ENCODE measurements at regions of chr10 and their contacts with region 1.

Region 1: GRCh38 chr10:72354478-72355213 is at the start of gene DNAJB12:
- DNase-seq: peak; percentile 90 to 96 (median 94)
- ATAC-seq: peak; percentile 94
- H3K4me3 ChIP-seq: peak within 1 kb of the TSS; percentile 98
- H3K4me3 Mint-ChIP-seq: peak within 1 kb of the TSS; percentile 93 to 99 (median 96)
- H3K27ac ChIP-seq: peak within 1 kb of the TSS; percentile 88
- H3K27ac Mint-ChIP-seq: peak within 1 kb of the TSS; percentile 93 to 100 (median 97)
- H3K4me1 ChIP-seq: peaks cover 8 to 13% of the 10 kb centered on the region in 2 donors
- H3K4me1 Mint-ChIP-seq: peaks cover 31 to 59% (median 46%) of the 10 kb centered on the region in 7 donors
- H3K27me3 ChIP-seq: no peaks in the 10 kb centered on the region
- H3K27me3 Mint-ChIP-seq: no peaks in the 10 kb centered on the region
- total RNA-seq, gene DNAJB12: 24.6 to 40.5 (median 36.2) TPM

Region 2: GRCh38 chr10:71371750-71372166 is 982.9 kb before region 1 on chr10:
- CTCF ChIA-PET with region 1: no interaction called
- POLR2A ChIA-PET with region 1: no interaction called
- intact Hi-C with region 1: loop called in 1 of 2 experiments (anchors 10 kb)
- DNase-seq: no peak
- ATAC-seq: peak; percentile 60
- H3K4me3 ChIP-seq: no peak overlapping the region
- H3K4me3 Mint-ChIP-seq: no peak overlapping the region
- H3K27ac ChIP-seq: no peak overlapping the region
- H3K27ac Mint-ChIP-seq: no peak overlapping the region
- H3K4me1 ChIP-seq: no peaks in the 10 kb centered on the region
- H3K4me1 Mint-ChIP-seq: peaks cover 0 to 10% (median 0%) of the 10 kb centered on the region in 7 donors
- H3K27me3 ChIP-seq: no peaks in the 10 kb centered on the region
- H3K27me3 Mint-ChIP-seq: peaks cover 0 to 13% (median 8%) of the 10 kb centered on the region in 5 donors

Region 3: GRCh38 chr10:72337020-72337629 is 17.5 kb before region 1 on chr10:
- CTCF ChIA-PET with region 1: interaction called, 27 read pairs
- POLR2A ChIA-PET with region 1: interaction called, 4 read pairs
- intact Hi-C with region 1: no loop called
- DNase-seq: peak; percentile 34 to 77 (median 56)
- ATAC-seq: peak; percentile 25
- H3K4me3 ChIP-seq: no peak overlapping the region
- H3K4me3 Mint-ChIP-seq: peak overlapping the region in 4 of 10 donors; percentile 12 to 93 (median 30)
- H3K27ac ChIP-seq: peak overlapping the region; percentile 79
- H3K27ac Mint-ChIP-seq: peak overlapping the region; percentile 29 to 99 (median 92)
- H3K4me1 ChIP-seq: peaks cover 52 to 58% of the 10 kb centered on the region in 2 donors
- H3K4me1 Mint-ChIP-seq: peaks cover 31 to 66% (median 55%) of the 10 kb centered on the region in 7 donors
- H3K27me3 ChIP-seq: no peaks in the 10 kb centered on the region
- H3K27me3 Mint-ChIP-seq: no peaks in the 10 kb centered on the region

Region 4: DNA sequence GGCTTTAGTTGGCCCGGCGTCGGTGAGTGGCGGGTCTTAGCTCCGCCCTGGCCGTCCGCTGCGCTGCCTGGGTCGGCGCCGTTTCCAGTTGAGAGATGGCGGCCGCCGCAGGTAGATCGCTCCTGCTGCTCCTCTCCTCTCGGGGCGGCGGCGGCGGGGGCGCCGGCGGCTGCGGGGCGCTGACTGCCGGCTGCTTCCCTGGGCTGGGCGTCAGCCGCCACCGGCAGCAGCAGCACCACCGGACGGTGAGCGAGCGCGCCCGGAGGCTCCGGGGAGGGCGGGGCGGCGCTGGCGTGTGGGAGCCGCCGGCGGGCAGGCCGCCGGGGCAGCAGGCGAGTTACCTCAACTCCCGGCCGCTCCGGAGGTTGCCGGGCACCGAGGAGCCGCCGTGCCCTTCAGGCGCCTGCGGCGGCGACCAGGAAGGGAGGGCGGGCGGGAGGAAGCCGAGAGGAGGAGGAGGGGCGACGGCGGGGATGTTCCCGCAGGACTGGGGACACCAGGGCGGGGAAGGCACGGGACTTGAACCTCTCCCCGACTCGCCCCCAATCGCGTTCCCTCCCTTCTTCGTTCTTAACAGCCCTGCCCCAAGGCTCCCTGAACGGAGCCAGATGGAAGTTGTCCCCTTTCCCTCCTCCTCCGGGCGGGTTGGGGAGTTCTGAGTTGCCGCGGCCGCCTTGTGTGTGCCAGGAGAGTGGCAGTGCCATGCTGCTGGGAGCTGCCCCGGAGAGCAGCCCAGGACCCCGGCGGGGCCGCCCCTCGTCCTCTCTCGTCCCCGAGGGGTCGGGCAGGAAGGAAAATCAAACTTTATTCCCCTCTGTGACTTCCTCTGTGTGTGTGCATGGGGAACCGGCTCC is 337.6 kb after region 1 on chr10 and contains the start of gene MCU:
- CTCF ChIA-PET with region 1: no interaction called
- POLR2A ChIA-PET with region 1: no interaction called
- intact Hi-C with region 1: loop called in 1 of 2 experiments (anchors 1 kb)
- DNase-seq: peak; percentile 85 to 94 (median 91)
- ATAC-seq: peak; percentile 98
- H3K4me3 ChIP-seq: peak within 1 kb of the TSS; percentile 86
- H3K4me3 Mint-ChIP-seq: peak within 1 kb of the TSS; percentile 84 to 93 (median 91)
- H3K27ac ChIP-seq: peak within 1 kb of the TSS; percentile 68
- H3K27ac Mint-ChIP-seq: peak within 1 kb of the TSS; percentile 5 to 93 (median 76)
- H3K4me1 ChIP-seq: peaks cover 11 to 12% of the 10 kb centered on the region in 2 donors
- H3K4me1 Mint-ChIP-seq: peaks cover 9 to 39% (median 32%) of the 10 kb centered on the region in 7 donors
- H3K27me3 ChIP-seq: no peaks in the 10 kb centered on the region
- H3K27me3 Mint-ChIP-seq: peaks cover 0 to 6% (median 0%) of the 10 kb centered on the region in 5 donors
- total RNA-seq, gene MCU: 7.7 to 14.3 (median 12.7) TPM

Region 5: DNA sequence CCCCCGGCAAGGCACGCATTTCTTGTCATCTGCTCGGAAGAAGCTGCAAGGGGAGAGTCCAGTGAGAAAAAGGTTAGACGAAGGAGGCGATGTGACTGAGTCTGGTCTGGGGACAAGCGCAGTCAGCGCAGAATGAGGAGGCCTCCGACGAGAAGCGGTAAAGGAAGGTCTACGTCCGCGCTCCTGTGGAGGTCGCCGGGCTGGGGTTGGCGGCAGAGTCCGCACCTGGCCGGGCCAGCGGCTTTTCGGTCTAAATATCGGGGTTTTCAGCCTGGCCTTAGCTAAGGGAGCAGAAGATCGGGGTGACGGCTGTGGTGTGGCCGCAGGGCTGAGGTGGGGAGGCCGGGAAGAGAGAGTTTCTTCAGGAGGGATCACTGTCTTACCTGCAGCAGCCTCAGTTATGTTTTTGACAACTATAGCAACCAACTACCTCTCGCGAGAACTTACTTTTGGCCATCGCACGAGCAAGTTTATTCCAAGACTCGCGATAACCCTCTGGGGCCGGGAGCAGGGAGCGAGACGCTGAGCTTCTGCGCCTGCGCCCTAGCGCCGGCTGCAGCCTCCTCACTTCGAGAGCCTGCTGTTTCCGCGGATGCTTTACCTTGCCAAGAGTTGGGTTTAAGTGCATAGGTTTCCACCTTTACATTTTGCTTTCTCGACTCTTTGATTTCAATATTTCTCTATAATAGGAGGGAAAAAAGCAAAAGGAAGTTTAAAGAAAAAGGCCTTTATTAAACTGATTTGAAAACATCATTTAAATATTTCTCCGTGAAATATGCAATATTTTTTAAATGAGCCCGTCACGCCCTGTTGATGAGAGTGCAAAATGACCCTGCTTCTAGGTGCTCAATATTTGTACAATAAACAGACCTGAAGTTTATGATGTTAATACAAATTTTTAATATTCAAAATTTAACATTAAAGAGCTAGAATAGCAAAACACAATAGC is 1004.0 kb after region 1 on chr10 and contains the start of gene CFAP70:
- CTCF ChIA-PET with region 1: no interaction called
- POLR2A ChIA-PET with region 1: no interaction called
- intact Hi-C with region 1: loop called in 1 of 2 experiments (anchors 1 kb)
- DNase-seq: peak; percentile 79 to 97 (median 95)
- ATAC-seq: peak; percentile 97
- H3K4me3 ChIP-seq: peak within 1 kb of the TSS; percentile 70
- H3K4me3 Mint-ChIP-seq: peak within 1 kb of the TSS; percentile 91 to 99 (median 94)
- H3K27ac ChIP-seq: peak within 1 kb of the TSS; percentile 85
- H3K27ac Mint-ChIP-seq: peak within 1 kb of the TSS; percentile 92 to 99 (median 97)
- H3K4me1 ChIP-seq: peaks cover 4 to 5% of the 10 kb centered on the region in 2 donors
- H3K4me1 Mint-ChIP-seq: peaks cover 11 to 20% (median 18%) of the 10 kb centered on the region in 7 donors
- H3K27me3 ChIP-seq: no peaks in the 10 kb centered on the region
- H3K27me3 Mint-ChIP-seq: peaks cover 0 to 23% (median 0%) of the 10 kb centered on the region in 5 donors
- total RNA-seq, gene CFAP70: 0.80 to 5.4 (median 4.6) TPM

Measured in naive thymus-derived CD4-positive, alpha-beta T cell (primary cell).